IMR-90 (cell line): ENCODE measurements at regions of chr4 and their contacts with region 1.

Region 1: GRCh38 chr4:110516106-110516922 is 40.4 kb downstream of the ENPEP start:
- DNase-seq: peak; percentile 51
- ATAC-seq: peak; percentile 87
- H3K4me3 ChIP-seq: peak overlapping the region; percentile 39; the same call in 1 of the 2 replicates
- H3K27ac ChIP-seq: no peak overlapping the region
- H3K4me1 ChIP-seq: no peaks in the 10 kb centered on the region
- H3K27me3 ChIP-seq: no peaks in the 10 kb centered on the region
- CTCF ChIP-seq: peak; percentile 69
- POLR2A ChIP-seq: no peak
- RAD21 ChIP-seq: peak; percentile 50

Region 2: GRCh38 chr4:109406338-109406931 is 1109.9 kb before region 1 on chr4:
- CTCF ChIA-PET with region 1: no interaction called
- POLR2A ChIA-PET with region 1: no interaction called
- dilution Hi-C with region 1: no loop called
- in situ Hi-C with region 1: loop called (anchors 25 kb)
- intact Hi-C with region 1: no loop called
- DNase-seq: peak; percentile 71
- ATAC-seq: peak; percentile 78
- H3K4me3 ChIP-seq: no peak overlapping the region
- H3K27ac ChIP-seq: no peak overlapping the region
- H3K4me1 ChIP-seq: no peaks in the 10 kb centered on the region
- H3K27me3 ChIP-seq: 0 out of 2 replicates have a peak, but pooled peaks cover under 1% of the 10 kb centered on the region
- CTCF ChIP-seq: peak; percentile 77
- POLR2A ChIP-seq: no peak
- RAD21 ChIP-seq: peak; percentile 80

Region 3: GRCh38 chr4:109998867-109999584 is 517.3 kb before region 1 on chr4:
- CTCF ChIA-PET with region 1: interaction called, 52 read pairs
- POLR2A ChIA-PET with region 1: no interaction called
- dilution Hi-C with region 1: no loop called
- in situ Hi-C with region 1: loop called (anchors 5 kb)
- intact Hi-C with region 1: loop called (anchors 1 kb)
- DNase-seq: peak; percentile 61
- ATAC-seq: peak; percentile 73
- H3K4me3 ChIP-seq: no peak overlapping the region
- H3K27ac ChIP-seq: no peak overlapping the region
- H3K4me1 ChIP-seq: no peaks in the 10 kb centered on the region
- H3K27me3 ChIP-seq: peaks cover 2% of the 10 kb centered on the region; the same call in 1 of the 2 replicates
- CTCF ChIP-seq: peak; percentile 91
- POLR2A ChIP-seq: no peak
- RAD21 ChIP-seq: peak; percentile 86

Region 4: DNA sequence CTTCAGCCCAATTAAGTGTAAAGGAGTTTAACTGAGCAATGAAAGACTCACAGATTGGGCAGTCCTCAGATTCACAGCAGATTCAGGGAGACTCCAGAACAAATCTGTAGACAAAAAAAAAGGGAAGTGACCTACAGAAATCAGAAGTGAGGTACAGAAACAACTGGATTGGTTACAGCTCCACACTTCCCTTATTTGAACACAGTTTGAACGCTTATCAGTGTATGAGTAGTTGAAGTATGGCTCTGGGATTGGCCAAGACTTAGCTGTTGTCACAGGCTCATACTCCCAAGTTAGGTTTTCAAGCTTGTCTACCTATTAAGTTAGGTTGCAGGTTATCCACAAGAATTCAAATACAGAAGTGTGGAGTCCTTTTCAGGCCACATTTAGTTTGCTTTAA is 205.5 kb before region 1 on chr4:
- CTCF ChIA-PET with region 1: no interaction called
- POLR2A ChIA-PET with region 1: no interaction called
- dilution Hi-C with region 1: no loop called
- in situ Hi-C with region 1: loop called (anchors 25 kb)
- intact Hi-C with region 1: loop called (anchors 1 kb)
- DNase-seq: no peak
- ATAC-seq: no peak
- H3K4me3 ChIP-seq: no peak overlapping the region
- H3K27ac ChIP-seq: no peak overlapping the region
- H3K4me1 ChIP-seq: no peaks in the 10 kb centered on the region
- H3K27me3 ChIP-seq: peaks cover 2% of the 10 kb centered on the region; the same call in 1 of the 2 replicates
- CTCF ChIP-seq: no peak
- POLR2A ChIP-seq: no peak
- RAD21 ChIP-seq: no peak

Region 5: GRCh38 chr4:112031712-112032328 is 1515.5 kb after region 1 on chr4:
- CTCF ChIA-PET with region 1: no interaction called
- POLR2A ChIA-PET with region 1: no interaction called
- dilution Hi-C with region 1: no loop called
- in situ Hi-C with region 1: no loop called
- intact Hi-C with region 1: loop called (anchors 5 kb)
- DNase-seq: peak; percentile 50
- ATAC-seq: peak; percentile 89
- H3K4me3 ChIP-seq: no peak overlapping the region
- H3K27ac ChIP-seq: no peak overlapping the region
- H3K4me1 ChIP-seq: no peaks in the 10 kb centered on the region
- H3K27me3 ChIP-seq: peaks cover 2% of the 10 kb centered on the region; the same call in 1 of the 2 replicates
- CTCF ChIP-seq: peak; percentile 69
- POLR2A ChIP-seq: no peak
- RAD21 ChIP-seq: peak; percentile 71